Activated naive CD4-positive, alpha-beta T cell treated with anti-CD3 and anti-CD28 coated beads for 36 hours (primary cell): ENCODE measurements at regions of chr17 and their contacts with region 1.

Region 1: DNA sequence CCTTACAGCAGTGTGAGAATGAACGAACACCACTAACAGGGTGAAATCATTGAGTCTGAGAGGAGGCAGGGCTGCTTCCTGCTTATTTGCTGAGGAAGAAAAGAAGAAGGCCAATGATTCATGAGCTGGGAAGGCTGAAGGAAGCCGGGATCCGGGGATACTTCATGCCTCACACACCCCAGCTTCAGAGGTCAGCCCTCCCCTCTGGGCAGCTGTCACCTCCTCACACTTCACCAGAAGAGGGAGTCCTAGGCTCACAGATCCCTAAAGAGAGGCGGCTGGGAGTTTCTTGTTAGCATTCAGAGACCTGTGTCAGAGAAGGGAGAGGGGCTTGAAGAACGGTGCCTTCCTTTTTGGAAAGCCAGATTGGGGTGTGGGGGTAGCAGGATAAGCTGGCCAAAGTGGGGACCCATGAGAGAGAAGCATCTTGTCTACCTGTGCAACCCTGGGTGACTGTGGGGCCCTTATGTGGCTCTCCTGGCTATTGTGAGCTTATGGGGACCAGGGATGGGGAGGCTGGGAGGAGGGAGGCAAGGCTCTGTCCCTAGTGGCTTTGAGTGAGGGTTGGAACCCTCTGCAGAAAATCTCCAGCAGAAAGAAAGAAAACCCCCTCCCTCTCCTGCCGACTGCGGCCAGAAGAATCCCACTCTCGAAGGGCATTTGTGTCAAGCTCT is 94.6 kb downstream of the RGS9 start:
- DNase-seq: peak; percentile 74
- H3K4me3 Mint-ChIP-seq: no peak overlapping the region
- H3K27ac Mint-ChIP-seq: no peak overlapping the region
- H3K4me1 Mint-ChIP-seq: peaks cover 27% of the 10 kb centered on the region
- H3K27me3 Mint-ChIP-seq: peaks cover 15% of the 10 kb centered on the region

Region 2: DNA sequence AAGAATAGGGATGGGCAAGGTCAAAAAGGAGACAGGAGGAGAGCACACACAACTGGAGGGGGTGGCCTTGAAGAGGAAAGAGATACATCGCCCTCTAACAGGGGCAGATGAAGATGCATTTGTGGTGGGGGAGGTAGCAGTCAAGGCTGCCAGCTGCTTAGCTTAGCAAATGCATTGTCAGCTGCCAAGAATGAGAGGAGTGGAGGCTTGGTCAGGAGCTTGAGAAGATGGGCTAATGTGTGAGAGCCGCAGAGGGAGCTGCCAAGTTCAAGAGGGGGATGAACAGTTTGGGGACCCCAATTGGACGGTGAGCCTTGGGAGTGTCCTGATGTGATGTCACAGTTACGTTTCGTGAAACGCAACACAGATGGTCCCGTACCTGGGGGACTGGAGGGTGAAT is 146.4 kb before region 1 on chr17:
- CTCF ChIA-PET with region 1: no interaction called
- intact Hi-C with region 1: no loop called
- DNase-seq: no peak
- H3K4me3 Mint-ChIP-seq: no peak overlapping the region
- H3K27ac Mint-ChIP-seq: no peak overlapping the region
- H3K4me1 Mint-ChIP-seq: no peaks in the 10 kb centered on the region
- H3K27me3 Mint-ChIP-seq: no peaks in the 10 kb centered on the region

Region 3: DNA sequence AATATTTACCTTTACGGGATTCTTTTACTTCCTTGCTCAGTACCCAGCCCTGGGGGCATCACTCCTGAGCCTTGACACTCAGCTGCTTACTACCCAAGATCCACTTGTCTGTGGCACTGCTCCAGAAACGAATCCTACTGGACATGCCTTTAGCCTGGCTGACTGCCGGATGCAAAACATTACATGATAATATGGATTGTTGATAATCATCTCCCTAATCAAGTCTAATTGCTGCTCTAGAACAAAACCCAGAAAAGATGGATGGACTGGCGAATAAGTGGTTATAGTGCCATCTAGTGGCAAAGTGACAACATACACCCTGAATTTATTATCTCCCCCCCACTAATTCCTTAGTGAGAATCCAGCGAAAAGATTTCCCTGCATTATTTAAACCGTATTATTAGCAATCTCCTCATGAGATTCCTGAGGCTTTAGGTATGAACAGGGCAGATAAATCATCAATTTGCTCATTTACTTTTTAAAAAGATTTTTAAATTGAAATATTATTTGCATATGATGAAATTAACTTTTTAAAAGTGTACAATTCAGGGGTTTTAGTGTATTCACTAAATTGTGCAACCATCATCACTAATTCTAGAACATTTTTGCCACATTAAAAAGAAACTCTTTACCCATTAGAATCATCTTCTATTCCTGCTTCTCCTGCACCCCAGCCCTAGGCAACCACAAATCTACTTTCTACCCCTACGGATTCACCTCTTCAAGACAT is 33.0 kb before region 1 on chr17:
- CTCF ChIA-PET with region 1: interaction called, 10 read pairs
- intact Hi-C with region 1: no loop called
- DNase-seq: no peak
- H3K4me3 Mint-ChIP-seq: no peak overlapping the region
- H3K27ac Mint-ChIP-seq: no peak overlapping the region
- H3K4me1 Mint-ChIP-seq: peaks cover 8% of the 10 kb centered on the region
- H3K27me3 Mint-ChIP-seq: no peaks in the 10 kb centered on the region

Region 4: DNA sequence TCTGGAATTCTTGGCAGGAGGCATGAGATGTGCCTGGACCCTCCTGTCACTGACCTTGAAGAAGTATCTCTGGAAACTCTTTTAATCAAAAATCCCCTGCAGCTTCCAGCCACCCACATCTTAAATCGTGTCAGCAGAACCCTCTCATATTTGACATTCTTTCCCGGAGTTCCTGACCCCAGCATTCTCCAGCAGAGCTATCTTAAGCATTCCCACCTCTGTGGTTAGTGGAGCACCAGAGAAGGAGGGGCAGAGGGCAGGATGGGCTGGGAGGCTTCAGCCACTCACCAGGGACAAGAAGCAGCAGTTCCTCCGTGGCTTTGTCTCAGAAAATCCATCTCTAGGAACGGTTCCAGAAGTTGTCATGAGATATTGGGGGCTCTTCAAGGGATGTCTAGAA is 55.2 kb after region 1 on chr17:
- CTCF ChIA-PET with region 1: interaction called, 13 read pairs
- intact Hi-C with region 1: loop called (anchors 5 kb)
- DNase-seq: no peak
- H3K4me3 Mint-ChIP-seq: no peak overlapping the region
- H3K27ac Mint-ChIP-seq: no peak overlapping the region
- H3K4me1 Mint-ChIP-seq: no peaks in the 10 kb centered on the region
- H3K27me3 Mint-ChIP-seq: no peaks in the 10 kb centered on the region

Region 5: DNA sequence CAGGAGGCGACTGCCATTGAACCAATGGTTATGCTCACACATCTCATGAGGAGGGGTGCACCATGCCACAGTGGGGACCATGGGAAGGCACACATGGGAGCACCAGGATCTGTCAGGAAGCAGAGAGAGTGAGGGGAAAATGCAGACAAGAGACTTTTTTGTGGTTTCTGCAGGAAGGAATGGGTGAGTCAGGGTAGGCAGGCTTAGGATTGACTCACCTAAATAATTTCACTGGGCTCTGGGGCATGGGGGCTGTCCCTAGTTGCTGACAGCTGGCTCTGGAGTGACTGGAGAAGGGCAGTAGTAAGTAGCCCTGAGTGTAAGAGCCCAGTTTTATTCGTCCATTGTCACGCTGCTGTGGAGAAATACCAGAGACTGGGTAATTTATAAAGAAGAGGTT is 127.2 kb after region 1 on chr17:
- CTCF ChIA-PET with region 1: no interaction called
- intact Hi-C with region 1: loop called (anchors 1 kb)
- DNase-seq: peak; percentile 78
- H3K4me3 Mint-ChIP-seq: no peak overlapping the region
- H3K27ac Mint-ChIP-seq: no peak overlapping the region
- H3K4me1 Mint-ChIP-seq: peaks cover 20% of the 10 kb centered on the region
- H3K27me3 Mint-ChIP-seq: no peaks in the 10 kb centered on the region

Region 6: GRCh38 chr17:65794572-65794971 is 562.8 kb after region 1 on chr17:
- CTCF ChIA-PET with region 1: interaction called, 7 read pairs
- intact Hi-C with region 1: loop called (anchors 2 kb)
- DNase-seq: no peak
- H3K4me3 Mint-ChIP-seq: no peak overlapping the region
- H3K27ac Mint-ChIP-seq: no peak overlapping the region
- H3K4me1 Mint-ChIP-seq: peaks cover 12% of the 10 kb centered on the region
- H3K27me3 Mint-ChIP-seq: peaks cover 2% of the 10 kb centered on the region

Region 7: DNA sequence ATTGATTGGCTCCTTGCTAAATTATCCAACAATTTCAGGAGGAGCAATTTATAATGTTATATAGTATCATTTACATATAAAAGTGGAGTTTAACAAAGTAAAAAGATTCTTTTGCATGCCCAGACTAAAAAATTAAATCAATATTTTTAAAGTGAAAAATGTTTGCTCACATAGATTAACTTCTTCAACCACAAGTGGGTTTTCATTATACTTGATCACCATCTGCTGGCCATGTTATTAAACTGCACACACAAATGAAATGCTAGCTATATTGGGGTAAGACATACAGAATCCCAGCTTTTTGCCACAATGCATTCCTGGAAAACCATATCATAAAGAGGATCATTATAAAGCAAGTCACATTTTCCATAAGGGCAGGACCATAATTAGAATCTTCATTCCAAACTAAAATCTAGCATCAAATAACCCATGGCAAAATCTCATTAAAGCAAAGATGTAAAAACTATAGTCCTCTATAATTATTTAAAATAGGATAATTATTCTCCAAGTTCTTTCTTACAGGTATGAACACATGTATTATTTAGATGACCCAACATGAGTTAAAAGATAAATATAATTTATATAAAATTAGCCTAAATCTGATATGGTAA is 933.8 kb after region 1 on chr17:
- CTCF ChIA-PET with region 1: interaction called, 17 read pairs
- intact Hi-C with region 1: loop called (anchors 1 kb)
- DNase-seq: no peak
- H3K4me3 Mint-ChIP-seq: no peak overlapping the region
- H3K27ac Mint-ChIP-seq: no peak overlapping the region
- H3K4me1 Mint-ChIP-seq: peaks cover 4% of the 10 kb centered on the region
- H3K27me3 Mint-ChIP-seq: no peaks in the 10 kb centered on the region